Dorsolateral prefrontal cortex (tissue), 120 donors: ENCODE measurements at regions of chr13 and their contacts with region 1.

Region 1: GRCh38 chr13:20814224-20814910 is 40.6 kb upstream of the EEF1AKMT1 start:
- DNase-seq: peak in 2 of 10 donors; percentile 10 to 24
- H3K4me3 ChIP-seq: peak overlapping the region in 1 of 59 donors; percentile 3
- H3K27ac ChIP-seq: peak overlapping the region in 20 of 59 donors; percentile 0 to 66 (median 30)
- H3K27me3 ChIP-seq: no peaks in the 10 kb centered on the region
- CTCF ChIP-seq: no peak

Region 2: GRCh38 chr13:20738616-20739015 is 75.8 kb before region 1 on chr13:
- intact Hi-C with region 1: no loop called
- DNase-seq: no peak
- H3K4me3 ChIP-seq: no peak overlapping the region
- H3K27ac ChIP-seq: no peak overlapping the region
- H3K27me3 ChIP-seq: no peaks in the 10 kb centered on the region
- CTCF ChIP-seq: no peak

Region 3: GRCh38 chr13:20773194-20774080 is 40.9 kb before region 1 on chr13 and contains the start of gene EEF1AKMT1:
- intact Hi-C with region 1: loop called in 1 of 2 experiments (anchors 5 kb)
- DNase-seq: peak; percentile 80 to 93 (median 88)
- H3K4me3 ChIP-seq: peak within 1 kb of the TSS; percentile 45 to 92 (median 79)
- H3K27ac ChIP-seq: peak within 1 kb of the TSS; percentile 35 to 95 (median 88)
- H3K27me3 ChIP-seq: no peaks in the 10 kb centered on the region
- CTCF ChIP-seq: peak in 26 of 56 donors; percentile 2 to 49 (median 28)
- total RNA-seq, gene EEF1AKMT1: 6.6 to 19.0 (median 12.2) TPM